ENCODE measurements at regions of chr7 and their contacts with region 1.

Region 1: GRCh38 chr7:142960955-142961512 is 1.1 kb downstream of the KEL start:
- DNase-seq: peak; percentile 6
- ATAC-seq: 0 out of 2 replicates have a peak, but pooled peaks have one; percentile 43
- H3K4me3 ChIP-seq: no peak overlapping the region
- H3K27ac ChIP-seq: no peak overlapping the region
- H3K4me1 ChIP-seq: peaks cover 15% of the 10 kb centered on the region in 2 experiments
- H3K27me3 ChIP-seq: 0 out of 2 replicates have a peak, but pooled peaks cover 4% of the 10 kb centered on the region
- CTCF ChIP-seq: peak; percentile 46 to 55 (median 50); a peak in 5 of 6 replicates
- POLR2A ChIP-seq: no peak
- RAD21 ChIP-seq: peak; percentile 66

Region 2: DNA sequence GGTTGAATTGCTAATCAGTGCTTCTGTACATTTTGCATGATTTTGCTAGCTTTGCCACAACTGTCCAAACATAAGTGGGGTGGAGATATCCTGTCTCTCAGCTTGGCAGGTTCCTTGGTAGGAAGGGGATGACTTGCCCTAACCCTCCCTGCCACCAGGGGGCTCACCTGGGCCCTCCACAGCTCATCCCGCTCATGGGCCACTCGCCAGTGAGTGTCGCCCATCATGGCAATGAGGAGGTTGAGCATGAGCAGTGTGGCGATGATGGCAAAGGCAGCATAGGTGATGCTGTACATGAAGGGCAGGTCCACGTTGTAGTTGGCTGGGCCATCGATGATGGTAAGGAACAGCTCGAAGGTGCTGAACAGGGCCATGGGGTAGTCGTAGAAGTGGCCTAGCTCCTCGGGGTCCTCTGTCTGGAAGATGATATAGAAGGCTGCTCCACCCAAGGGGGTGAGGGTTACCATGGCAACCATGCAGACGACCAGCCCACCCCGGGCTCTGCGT is 87.7 kb before region 1 on chr7:
- CTCF ChIA-PET with region 1: interaction called, 39 read pairs
- POLR2A ChIA-PET with region 1: no interaction called
- RAD21 ChIA-PET with region 1: interaction called, 5 read pairs
- intact Hi-C with region 1: no loop called
- DNase-seq: peak; percentile 28
- ATAC-seq: peak; percentile 94
- H3K4me3 ChIP-seq: no peak overlapping the region
- H3K27ac ChIP-seq: no peak overlapping the region
- H3K4me1 ChIP-seq: no peaks in the 10 kb centered on the region
- H3K27me3 ChIP-seq: no peaks in the 10 kb centered on the region
- CTCF ChIP-seq: peak; percentile 76 to 93 (median 90)
- POLR2A ChIP-seq: no peak
- RAD21 ChIP-seq: peak; percentile 40; the same call in 1 of the 2 replicates

Region 3: DNA sequence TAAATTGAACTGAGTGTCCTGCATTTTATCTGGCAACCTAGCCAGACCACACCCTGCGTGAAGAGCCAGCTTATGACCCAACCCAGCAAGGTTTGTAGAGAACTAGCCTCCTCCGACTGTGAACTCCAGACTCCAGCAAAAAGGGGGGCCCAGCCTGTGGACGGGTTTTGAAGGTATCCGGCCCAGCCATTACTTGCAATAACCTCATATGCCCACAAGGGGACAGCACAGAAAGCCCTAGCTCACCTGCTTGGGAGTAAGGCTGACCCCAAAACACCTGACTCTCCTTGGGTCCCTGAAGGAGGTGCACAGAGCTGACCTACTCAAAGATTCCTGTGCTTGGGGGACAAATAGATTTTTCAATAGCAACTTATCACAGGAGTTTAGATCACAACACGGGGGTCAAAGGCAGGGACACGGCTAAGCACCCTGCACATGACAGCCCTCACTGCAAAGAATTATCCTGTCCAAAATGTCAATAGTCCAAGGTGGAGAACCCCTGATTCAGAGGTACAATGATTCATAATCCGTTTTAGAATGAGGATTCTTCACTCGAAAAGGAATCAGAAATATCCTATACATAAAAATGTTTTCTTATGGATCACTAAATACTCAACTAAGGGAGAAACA is 80.0 kb before region 1 on chr7:
- CTCF ChIA-PET with region 1: interaction called, 38 read pairs
- POLR2A ChIA-PET with region 1: no interaction called
- RAD21 ChIA-PET with region 1: interaction called in 1 of 2 experiments, 3 read pairs
- intact Hi-C with region 1: loop called (anchors 2 kb)
- DNase-seq: peak; percentile 37
- ATAC-seq: peak; percentile 74
- H3K4me3 ChIP-seq: no peak overlapping the region
- H3K27ac ChIP-seq: no peak overlapping the region
- H3K4me1 ChIP-seq: peaks cover 3 to 9% of the 10 kb centered on the region in 2 experiments; a peak in 3 of 4 replicates
- H3K27me3 ChIP-seq: peaks cover 6% of the 10 kb centered on the region; the same call in 1 of the 2 replicates
- CTCF ChIP-seq: peak; percentile 81 to 92 (median 90)
- POLR2A ChIP-seq: no peak
- RAD21 ChIP-seq: peak; percentile 70

Region 4: GRCh38 chr7:142908921-142909890 is 51.8 kb before region 1 on chr7:
- CTCF ChIA-PET with region 1: interaction called, 13 read pairs
- POLR2A ChIA-PET with region 1: no interaction called
- RAD21 ChIA-PET with region 1: interaction called in 1 of 2 experiments, 5 read pairs
- intact Hi-C with region 1: no loop called
- DNase-seq: peak; percentile 18
- ATAC-seq: peak; percentile 96
- H3K4me3 ChIP-seq: no peak overlapping the region
- H3K27ac ChIP-seq: no peak overlapping the region
- H3K4me1 ChIP-seq: no peaks in the 10 kb centered on the region
- H3K27me3 ChIP-seq: peaks cover 7% of the 10 kb centered on the region; the same call in 1 of the 2 replicates
- CTCF ChIP-seq: peak; percentile 43 to 69 (median 49); a peak in 5 of 6 replicates
- POLR2A ChIP-seq: no peak
- RAD21 ChIP-seq: peak; percentile 40